PC-3 (cell line): ENCODE measurements at regions of chr7 and their contacts with region 1.

Region 1: DNA sequence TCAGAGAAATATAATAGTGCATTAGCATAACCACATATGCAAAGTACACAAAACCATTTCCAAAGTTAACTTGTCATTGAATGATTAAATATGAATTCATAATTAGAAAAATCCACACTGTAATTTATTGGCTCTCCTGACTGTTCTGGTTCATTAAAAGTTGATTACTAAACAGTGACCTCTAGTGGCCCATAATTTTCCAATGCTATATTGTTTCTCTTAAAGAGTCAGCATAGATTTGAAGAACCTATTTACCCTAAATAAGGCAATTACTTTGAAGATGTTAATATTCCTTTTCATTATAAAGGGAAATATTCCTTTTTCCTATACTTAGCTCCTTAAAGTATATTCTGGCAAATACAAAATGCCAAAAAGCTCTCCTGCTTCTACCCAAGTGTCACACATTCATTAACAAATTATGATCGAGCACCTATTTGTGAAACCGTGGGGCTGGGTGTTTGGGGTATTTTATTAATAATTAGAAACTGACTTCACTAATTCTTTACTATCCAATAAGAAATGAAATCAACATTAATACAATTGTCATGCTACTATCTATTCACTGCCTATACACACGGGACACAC is 86.2 kb downstream of the HIBADH start:
- DNase-seq: peak; percentile 79
- ATAC-seq: peak; percentile 56
- H3K4me3 ChIP-seq: no peak overlapping the region
- H3K27ac ChIP-seq: no peak overlapping the region
- H3K4me1 ChIP-seq: peaks cover 11% of the 10 kb centered on the region
- H3K27me3 ChIP-seq: no peaks in the 10 kb centered on the region
- CTCF ChIP-seq: peak; percentile 80

Region 2: DNA sequence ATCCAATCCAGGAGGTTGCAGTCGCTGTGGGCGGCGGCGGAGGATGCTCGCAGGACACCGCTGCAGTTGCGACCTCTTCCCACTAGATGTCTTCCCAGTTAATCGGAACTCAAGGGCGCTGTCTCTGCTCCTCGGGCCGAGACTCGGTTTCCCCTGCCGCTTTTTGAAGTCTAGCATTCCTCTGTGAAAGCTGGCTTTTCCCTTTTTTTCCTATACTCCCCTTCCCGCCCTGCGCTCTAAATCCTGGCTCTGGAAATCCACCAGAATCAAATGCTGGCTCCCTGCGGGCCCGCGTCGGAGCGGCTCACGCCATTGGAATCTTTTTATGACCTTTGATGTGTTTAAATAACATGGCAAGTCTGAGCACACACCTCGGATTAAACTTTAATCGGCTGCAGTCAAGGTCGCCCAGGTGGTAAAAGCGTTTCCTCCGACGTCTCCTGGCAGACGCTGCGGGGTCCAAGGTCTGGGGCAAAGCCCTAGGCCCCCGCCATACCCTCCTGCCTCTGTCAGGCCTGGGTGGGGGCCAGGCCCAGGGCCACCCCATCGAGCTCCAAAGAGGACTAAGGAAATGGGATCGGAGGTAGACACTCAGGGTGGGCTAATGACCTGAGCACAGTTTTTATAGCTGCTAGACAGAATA is 365.9 kb before region 1 on chr7:
- CTCF ChIA-PET with region 1: interaction called, 3 read pairs
- POLR2A ChIA-PET with region 1: no interaction called
- intact Hi-C with region 1: loop called (anchors 1 kb)
- DNase-seq: peak; percentile 65
- ATAC-seq: peak; percentile 46
- H3K4me3 ChIP-seq: peak overlapping the region; percentile 65
- H3K27ac ChIP-seq: no peak overlapping the region
- H3K4me1 ChIP-seq: peaks cover 36% of the 10 kb centered on the region
- H3K27me3 ChIP-seq: no peaks in the 10 kb centered on the region
- CTCF ChIP-seq: peak; percentile 83

Region 3: GRCh38 chr7:27235387-27236311 is 340.8 kb before region 1 on chr7:
- CTCF ChIA-PET with region 1: interaction called, 7 read pairs
- POLR2A ChIA-PET with region 1: no interaction called
- intact Hi-C with region 1: loop called (anchors 2 kb)
- DNase-seq: peak; percentile 62
- ATAC-seq: peak; percentile 76
- H3K4me3 ChIP-seq: peak overlapping the region; percentile 72
- H3K27ac ChIP-seq: no peak overlapping the region
- H3K4me1 ChIP-seq: peaks cover 9% of the 10 kb centered on the region; the same call in 1 of the 2 replicates
- H3K27me3 ChIP-seq: no peaks in the 10 kb centered on the region
- CTCF ChIP-seq: peak; percentile 75

Region 4: GRCh38 chr7:27442446-27442845 is 134.0 kb before region 1 on chr7:
- CTCF ChIA-PET with region 1: no interaction called
- POLR2A ChIA-PET with region 1: no interaction called
- intact Hi-C with region 1: loop called (anchors 5 kb)
- DNase-seq: peak; percentile 94
- ATAC-seq: peak; percentile 91
- H3K4me3 ChIP-seq: no peak overlapping the region
- H3K27ac ChIP-seq: peak overlapping the region; percentile 72
- H3K4me1 ChIP-seq: peaks cover 23% of the 10 kb centered on the region
- H3K27me3 ChIP-seq: no peaks in the 10 kb centered on the region
- CTCF ChIP-seq: no peak

Region 5: DNA sequence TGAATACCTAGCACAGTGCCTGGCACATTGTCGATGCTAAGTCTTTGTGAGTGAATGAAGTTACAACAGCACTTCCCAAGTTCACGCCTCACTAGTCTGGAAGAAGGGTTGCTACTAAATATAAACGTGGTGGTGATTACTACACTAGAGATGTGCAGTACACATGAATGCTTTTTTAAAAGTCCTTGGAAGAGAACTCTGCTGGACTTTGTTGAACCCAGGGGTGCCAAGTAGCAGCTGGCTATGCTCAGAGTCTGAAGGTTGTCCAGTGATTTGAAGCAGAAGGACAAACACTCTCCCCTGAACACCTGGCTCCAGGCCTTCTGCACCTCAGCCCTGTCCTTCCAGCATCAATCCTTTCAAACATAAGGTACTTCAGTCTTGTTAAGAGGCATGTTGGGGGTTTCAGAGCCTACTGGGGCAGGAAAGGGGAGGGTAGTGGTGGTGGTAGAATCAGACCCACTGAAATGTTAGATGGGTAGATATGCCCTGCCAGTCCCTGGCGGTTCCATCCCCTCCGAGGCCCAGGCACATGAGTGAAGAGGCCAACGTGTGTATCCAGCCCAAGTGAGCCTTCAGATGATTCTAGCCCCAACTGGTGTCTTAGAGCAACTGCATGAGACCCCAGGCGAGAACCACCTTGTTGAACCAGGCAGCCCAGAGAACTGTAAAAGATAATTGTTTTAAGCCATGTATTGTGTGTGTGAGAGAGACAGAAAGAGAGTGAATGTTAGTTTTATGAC is 257.9 kb after region 1 on chr7:
- CTCF ChIA-PET with region 1: no interaction called
- POLR2A ChIA-PET with region 1: no interaction called
- intact Hi-C with region 1: no loop called
- DNase-seq: no peak
- ATAC-seq: no peak
- H3K4me3 ChIP-seq: no peak overlapping the region
- H3K27ac ChIP-seq: no peak overlapping the region
- H3K4me1 ChIP-seq: no peaks in the 10 kb centered on the region
- H3K27me3 ChIP-seq: no peaks in the 10 kb centered on the region
- CTCF ChIP-seq: no peak